Endothelial cell of umbilical vein (primary cell): ENCODE measurements at regions of chr1 and their contacts with region 1.

Region 1: DNA sequence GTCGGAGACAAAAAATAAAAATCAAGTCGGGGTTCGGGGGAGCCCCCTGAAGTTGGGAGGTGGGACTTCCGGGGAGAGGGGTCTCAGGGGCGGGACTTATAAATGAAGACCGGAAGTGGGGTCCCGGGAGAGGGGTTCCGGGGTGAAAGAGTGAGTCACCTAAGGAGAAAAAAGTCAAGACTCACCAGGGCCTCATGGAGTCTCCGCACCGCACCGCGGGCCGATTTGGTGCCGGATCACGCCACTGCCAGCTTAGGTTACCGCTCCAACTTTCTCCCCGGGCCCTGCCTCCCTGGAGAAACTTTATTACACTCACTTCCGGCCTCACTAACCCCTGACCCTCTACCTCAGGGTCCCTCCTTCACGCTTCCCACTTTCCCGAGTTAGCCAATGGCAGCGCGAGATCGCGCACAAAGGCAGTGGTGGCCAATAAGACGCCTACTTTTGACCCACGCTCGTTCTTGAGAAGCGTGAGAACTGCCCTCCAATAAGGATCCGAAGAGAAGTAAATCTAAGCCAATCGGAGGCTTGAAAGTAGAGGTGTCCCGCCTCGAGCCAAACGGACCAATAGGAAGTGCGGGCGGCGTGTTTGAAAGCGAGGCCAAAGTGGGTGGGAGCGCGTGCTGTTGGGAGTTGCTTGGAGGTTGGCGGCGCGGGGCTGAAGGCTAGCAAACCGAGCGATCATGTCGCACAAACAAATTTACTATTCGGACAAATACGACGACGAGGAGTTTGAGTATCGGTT is at the start of gene CKS1B:
- DNase-seq: peak; percentile 100
- H3K4me3 ChIP-seq: peak within 1 kb of the TSS; percentile 64 to 88 (median 87)
- H3K27ac ChIP-seq: peak within 1 kb of the TSS; percentile 99
- H3K4me1 ChIP-seq: peaks cover 36% of the 10 kb centered on the region
- H3K27me3 ChIP-seq: no peaks in the 10 kb centered on the region
- CTCF ChIP-seq: no peak
- POLR2A ChIP-seq: peak; percentile 60
- total RNA-seq, gene CKS1B: 126 and 128 TPM in 2 replicates

Region 2: DNA sequence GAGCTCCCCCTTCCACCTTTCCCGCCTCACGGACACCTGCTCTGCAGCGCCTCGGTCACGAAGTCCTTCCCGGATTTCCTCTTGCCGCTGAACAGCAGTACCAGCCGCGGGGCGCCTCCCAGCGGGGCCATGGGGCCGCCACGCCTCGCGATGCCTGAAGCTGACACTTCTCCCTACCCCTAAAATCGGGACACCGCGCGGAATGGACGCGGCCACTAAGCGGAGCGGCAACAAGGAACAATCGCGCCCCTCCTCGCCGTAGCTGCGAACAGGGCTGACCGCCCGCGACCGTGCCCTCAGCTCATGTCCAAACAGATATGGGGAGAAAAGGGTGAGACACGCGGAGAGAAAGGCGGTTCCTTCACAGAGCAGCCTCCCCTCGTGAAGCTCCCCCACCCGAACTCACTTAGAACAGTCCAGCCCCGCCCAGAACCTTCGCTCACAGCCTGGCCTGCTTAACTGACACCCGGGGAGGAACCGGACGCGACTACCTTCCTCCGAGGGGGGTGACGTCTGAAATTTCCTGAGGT is 37.6 kb before region 1 on chr1 and contains the start of gene PMVK:
- CTCF ChIA-PET with region 1: interaction called, 5 read pairs
- POLR2A ChIA-PET with region 1: interaction called, 9 read pairs
- dilution Hi-C with region 1: no loop called
- intact Hi-C with region 1: loop called (anchors 1 kb)
- DNase-seq: peak; percentile 94
- H3K4me3 ChIP-seq: peak within 1 kb of the TSS; percentile 26 to 79 (median 55)
- H3K27ac ChIP-seq: peak within 1 kb of the TSS; percentile 92
- H3K4me1 ChIP-seq: peaks cover 8% of the 10 kb centered on the region
- H3K27me3 ChIP-seq: no peaks in the 10 kb centered on the region
- CTCF ChIP-seq: peak in 1 of 2 donors; percentile 36
- POLR2A ChIP-seq: peak; percentile 73
- total RNA-seq, gene PMVK: 22.6 and 23.0 TPM in 2 replicates

Region 3: DNA sequence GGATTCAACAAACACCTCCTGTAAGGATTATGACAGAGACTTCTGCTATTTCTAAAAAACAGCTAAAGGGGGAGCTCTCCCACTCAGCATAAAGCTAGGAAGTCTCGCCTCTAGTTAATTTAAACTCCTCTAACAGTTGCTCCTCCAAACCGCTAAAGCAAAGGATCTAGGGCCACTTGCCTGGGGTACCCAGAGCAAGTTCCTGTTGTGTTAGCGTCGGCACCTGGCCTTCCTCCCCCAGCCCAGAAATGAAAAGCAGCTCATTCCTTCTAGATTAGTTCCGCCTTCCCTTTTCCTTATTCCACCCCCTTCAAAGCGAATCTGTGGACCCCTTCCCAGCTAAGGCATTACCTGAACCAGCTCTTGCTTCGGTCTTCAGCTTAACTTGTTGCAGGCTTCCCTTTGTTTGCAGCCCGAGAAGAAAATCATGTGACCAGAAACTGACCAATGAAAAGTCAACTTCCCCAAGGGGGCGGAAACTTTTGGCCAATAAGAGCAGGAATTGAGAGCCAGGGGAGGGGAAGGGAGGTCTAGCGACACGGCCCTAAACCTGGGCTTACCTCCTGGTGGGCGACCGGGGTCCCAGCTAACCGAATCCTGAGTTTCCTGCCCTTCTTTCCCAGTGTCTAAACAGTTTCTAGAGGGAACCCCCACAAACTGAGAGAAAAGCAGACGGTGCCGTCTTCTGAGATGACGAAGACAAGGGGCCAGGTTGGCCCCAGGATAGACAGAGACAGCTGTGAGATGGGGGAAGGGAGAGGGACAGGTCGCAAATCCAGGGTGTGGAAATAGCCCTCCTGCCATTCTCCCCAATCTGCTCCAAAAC is 18.3 kb before region 1 on chr1 and contains the start of gene PBXIP1:
- CTCF ChIA-PET with region 1: interaction called, 30 read pairs
- POLR2A ChIA-PET with region 1: interaction called, 24 read pairs
- dilution Hi-C with region 1: no loop called
- intact Hi-C with region 1: loop called (anchors 1 kb)
- DNase-seq: peak; percentile 98
- H3K4me3 ChIP-seq: peak within 1 kb of the TSS; percentile 19 to 76 (median 57)
- H3K27ac ChIP-seq: peak within 1 kb of the TSS; percentile 69
- H3K4me1 ChIP-seq: peaks cover 26% of the 10 kb centered on the region
- H3K27me3 ChIP-seq: no peaks in the 10 kb centered on the region
- CTCF ChIP-seq: peak; percentile 12 to 33
- POLR2A ChIP-seq: no peak
- total RNA-seq, gene PBXIP1: 49.0 and 49.4 TPM in 2 replicates

Region 4: GRCh38 chr1:154992721-154993571 is 18.7 kb after region 1 on chr1:
- CTCF ChIA-PET with region 1: interaction called, 63 read pairs
- POLR2A ChIA-PET with region 1: interaction called, 5 read pairs
- dilution Hi-C with region 1: no loop called
- intact Hi-C with region 1: loop called (anchors 1 kb)
- DNase-seq: no peak
- H3K4me3 ChIP-seq: no peak overlapping the region
- H3K27ac ChIP-seq: no peak overlapping the region
- H3K4me1 ChIP-seq: peaks cover 2% of the 10 kb centered on the region
- H3K27me3 ChIP-seq: no peaks in the 10 kb centered on the region
- CTCF ChIP-seq: peak in 1 of 2 donors; percentile 40
- POLR2A ChIP-seq: no peak

Region 5: DNA sequence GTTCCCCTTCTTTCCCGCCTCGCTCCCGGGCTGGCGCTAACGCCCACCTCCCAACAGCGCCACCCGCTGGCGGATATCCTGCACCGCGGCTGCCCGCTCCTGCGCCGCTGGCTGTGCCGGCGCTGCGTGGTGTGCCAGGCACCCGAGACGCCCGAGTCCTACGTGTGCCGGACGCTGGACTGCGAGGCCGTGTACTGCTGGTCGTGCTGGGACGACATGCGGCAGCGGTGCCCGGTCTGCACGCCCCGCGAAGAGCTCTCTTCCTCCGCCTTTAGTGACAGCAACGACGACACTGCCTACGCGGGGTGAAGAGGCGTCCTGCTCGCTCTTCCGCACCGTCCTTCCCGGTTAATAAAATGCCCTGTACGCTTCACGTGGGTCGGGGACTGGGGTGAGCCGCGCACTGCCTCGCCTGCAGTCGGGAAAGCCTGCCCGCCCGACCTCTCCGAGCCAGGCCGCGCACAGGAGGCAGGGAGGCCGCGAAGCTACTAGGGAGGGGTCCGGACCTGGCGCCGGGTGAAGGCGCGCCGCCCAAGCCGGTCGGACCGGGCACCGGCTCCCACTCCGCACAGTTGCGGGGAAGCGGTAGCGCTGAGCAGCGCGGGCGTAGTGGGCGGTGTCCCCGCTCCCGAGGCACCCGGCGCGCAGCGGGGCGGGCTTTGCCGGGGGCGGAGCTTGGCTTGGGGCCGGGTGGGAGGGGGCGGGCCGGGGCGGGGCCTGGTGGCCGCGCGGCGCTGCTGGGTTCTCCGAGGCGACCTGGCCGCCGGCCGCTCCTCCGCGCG is 76.5 kb after region 1 on chr1 and contains the start of gene ADAM15:
- CTCF ChIA-PET with region 1: interaction called, 17 read pairs
- POLR2A ChIA-PET with region 1: no interaction called
- dilution Hi-C with region 1: no loop called
- intact Hi-C with region 1: no loop called
- DNase-seq: peak; percentile 81
- H3K4me3 ChIP-seq: peak within 1 kb of the TSS; percentile 66 to 75 (median 74)
- H3K27ac ChIP-seq: peak within 1 kb of the TSS; percentile 53
- H3K4me1 ChIP-seq: peaks cover 24% of the 10 kb centered on the region
- H3K27me3 ChIP-seq: no peaks in the 10 kb centered on the region
- CTCF ChIP-seq: peak; percentile 94 to 99
- POLR2A ChIP-seq: no peak
- total RNA-seq, gene ADAM15: 268 and 299 TPM in 2 replicates

Region 6: GRCh38 chr1:155236441-155236840 is 262.2 kb after region 1 on chr1:
- CTCF ChIA-PET with region 1: no interaction called
- POLR2A ChIA-PET with region 1: no interaction called
- dilution Hi-C with region 1: no loop called
- intact Hi-C with region 1: no loop called
- DNase-seq: no peak
- H3K4me3 ChIP-seq: no peak overlapping the region
- H3K27ac ChIP-seq: no peak overlapping the region
- H3K4me1 ChIP-seq: peaks cover 8% of the 10 kb centered on the region
- H3K27me3 ChIP-seq: no peaks in the 10 kb centered on the region
- CTCF ChIP-seq: no peak
- POLR2A ChIP-seq: no peak